CD4-positive, alpha-beta T cell (primary cell): ENCODE measurements at regions of chr2 and their contacts with region 1.

Region 1: DNA sequence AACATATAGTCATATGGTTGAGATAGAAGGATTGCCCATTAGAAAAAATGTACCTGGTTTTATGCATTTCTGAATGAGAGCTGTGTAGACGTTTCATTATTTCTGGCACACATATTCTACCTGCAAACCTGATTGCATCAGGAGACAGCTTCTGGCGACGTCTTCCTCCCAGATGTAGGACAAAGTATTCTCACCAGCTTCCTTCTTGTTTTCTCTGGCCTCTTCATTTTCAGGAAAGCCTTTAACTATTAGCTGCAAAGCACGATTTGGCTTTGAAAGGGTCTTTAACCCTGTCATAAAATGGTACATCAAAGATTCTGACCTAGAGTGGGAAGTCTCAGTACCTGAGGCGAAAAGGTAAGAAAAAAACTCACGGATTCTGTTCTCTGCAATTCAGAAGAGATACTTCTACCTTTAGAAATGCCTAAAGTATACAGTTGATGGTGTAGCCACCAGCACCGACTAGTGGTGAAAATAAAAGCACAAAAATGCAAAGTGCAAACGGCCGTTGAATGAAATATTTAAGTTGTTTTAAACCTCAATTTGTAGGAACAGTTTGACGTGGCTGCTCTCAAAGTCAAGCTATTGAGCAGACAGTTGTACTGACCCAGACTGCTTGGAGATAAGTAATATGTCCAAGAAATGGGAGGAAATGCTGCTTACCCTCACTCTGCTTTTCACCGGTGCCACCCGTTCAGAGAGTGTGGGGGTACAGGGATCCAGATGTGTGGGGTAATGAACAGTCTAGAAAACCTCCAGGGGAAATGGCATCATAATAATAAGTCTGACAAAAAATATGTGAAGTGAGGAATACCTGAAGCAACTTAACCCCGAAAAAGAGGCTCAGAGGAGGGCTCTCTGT is 20.2 kb downstream of the IL18RAP start:
- DNase-seq: peak in 13 of 14 experiments; percentile 11 to 75 (median 29)
- ATAC-seq: peak; percentile 78
- H3K4me3 ChIP-seq: no peak overlapping the region
- H3K4me3 Mint-ChIP-seq: no peak overlapping the region
- H3K27ac ChIP-seq: no peak overlapping the region
- H3K27ac Mint-ChIP-seq: no peak overlapping the region
- H3K4me1 ChIP-seq: no peaks in the 10 kb centered on the region
- H3K4me1 Mint-ChIP-seq: peaks cover 7% of the 10 kb centered on the region
- H3K27me3 ChIP-seq: no peaks in the 10 kb centered on the region
- H3K27me3 Mint-ChIP-seq: no peaks in the 10 kb centered on the region
- CTCF ChIP-seq: peak; percentile 84

Region 2: DNA sequence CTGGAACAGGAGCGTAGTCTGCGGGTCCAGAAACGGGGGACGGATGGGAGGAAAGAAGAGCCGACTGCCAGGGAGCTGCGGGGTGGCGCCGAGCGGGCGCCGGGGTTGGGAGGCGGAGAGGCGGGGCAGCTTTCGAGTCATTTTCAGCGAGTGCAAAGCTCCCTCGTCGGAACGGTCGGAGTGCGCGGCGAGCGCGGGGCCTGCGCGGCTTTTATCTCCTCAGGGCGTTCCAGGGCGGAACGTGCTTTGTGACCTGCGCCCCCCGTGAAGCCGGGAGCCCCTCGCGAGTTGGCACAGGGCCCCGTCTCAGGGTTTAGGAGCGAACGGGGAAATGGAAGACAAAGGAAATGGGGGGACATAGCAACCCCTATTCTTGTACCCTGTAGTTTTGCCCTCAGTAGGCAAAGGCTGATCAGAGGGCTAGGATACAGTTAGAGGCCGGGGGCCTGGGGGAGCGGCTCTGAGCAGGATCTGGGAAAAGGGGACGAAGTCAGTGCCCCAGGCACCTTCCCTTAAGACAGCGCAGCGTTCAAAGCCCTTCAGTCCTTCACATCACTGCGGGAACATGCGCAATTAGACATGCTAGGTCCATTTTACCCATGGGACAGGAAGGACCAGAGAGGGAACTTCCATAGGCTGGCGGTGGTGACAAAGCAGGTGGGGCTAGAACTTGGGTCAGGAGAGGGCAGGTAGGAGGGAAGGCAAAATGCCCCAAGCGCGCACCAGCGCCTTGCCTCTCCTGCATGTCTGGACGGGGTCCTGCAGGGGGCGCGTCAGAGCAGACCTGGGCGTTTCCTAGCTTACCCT is 192.0 kb before region 1 on chr2:
- CTCF ChIA-PET with region 1: interaction called, 7 read pairs
- POLR2A ChIA-PET with region 1: interaction called, 3 read pairs
- intact Hi-C with region 1: loop called (anchors 1 to 2 kb)
- DNase-seq: peak; percentile 48 to 84 (median 62)
- ATAC-seq: peak; percentile 87
- H3K4me3 ChIP-seq: peak overlapping the region; percentile 60
- H3K4me3 Mint-ChIP-seq: peak overlapping the region; percentile 96
- H3K27ac ChIP-seq: no peak overlapping the region
- H3K27ac Mint-ChIP-seq: peak overlapping the region; percentile 12
- H3K4me1 ChIP-seq: peaks cover 19% of the 10 kb centered on the region
- H3K4me1 Mint-ChIP-seq: peaks cover 23% of the 10 kb centered on the region
- H3K27me3 ChIP-seq: no peaks in the 10 kb centered on the region
- H3K27me3 Mint-ChIP-seq: no peaks in the 10 kb centered on the region
- CTCF ChIP-seq: peak; percentile 90

Region 3: DNA sequence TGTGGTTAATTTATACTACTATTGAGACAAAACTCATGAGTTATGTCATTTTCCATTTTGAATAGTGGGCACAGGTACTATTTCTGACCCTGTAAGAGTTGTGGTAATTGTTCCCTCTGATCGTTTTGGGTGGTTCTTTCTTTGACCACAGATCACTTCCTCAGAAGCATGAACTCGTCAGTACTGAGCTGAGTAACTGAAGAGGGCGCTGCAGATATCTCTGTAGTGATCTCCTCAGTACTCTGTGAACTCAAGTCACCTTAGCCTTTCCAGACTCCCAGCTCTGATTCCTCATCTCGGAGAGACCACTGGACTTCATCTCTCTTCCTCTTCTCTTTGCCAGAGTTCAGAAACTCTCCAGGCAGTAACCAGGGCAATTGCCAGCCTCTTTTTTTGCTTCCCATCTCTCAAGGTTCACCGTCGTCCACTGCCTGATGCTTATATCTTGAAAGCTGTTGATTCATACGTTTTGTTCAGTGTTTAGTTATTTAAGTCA is 141.3 kb before region 1 on chr2:
- CTCF ChIA-PET with region 1: interaction called, 11 read pairs
- POLR2A ChIA-PET with region 1: no interaction called
- intact Hi-C with region 1: loop called (anchors 1 to 2 kb)
- DNase-seq: peak in 10 of 14 experiments; percentile 7 to 76 (median 32)
- ATAC-seq: peak; percentile 80
- H3K4me3 ChIP-seq: no peak overlapping the region
- H3K4me3 Mint-ChIP-seq: no peak overlapping the region
- H3K27ac ChIP-seq: no peak overlapping the region
- H3K27ac Mint-ChIP-seq: no peak overlapping the region
- H3K4me1 ChIP-seq: peaks cover 7% of the 10 kb centered on the region
- H3K4me1 Mint-ChIP-seq: peaks cover 18% of the 10 kb centered on the region
- H3K27me3 ChIP-seq: peaks cover 0 to 3% of the 10 kb centered on the region in 2 experiments
- H3K27me3 Mint-ChIP-seq: peaks cover 10% of the 10 kb centered on the region
- CTCF ChIP-seq: peak; percentile 61

Region 4: DNA sequence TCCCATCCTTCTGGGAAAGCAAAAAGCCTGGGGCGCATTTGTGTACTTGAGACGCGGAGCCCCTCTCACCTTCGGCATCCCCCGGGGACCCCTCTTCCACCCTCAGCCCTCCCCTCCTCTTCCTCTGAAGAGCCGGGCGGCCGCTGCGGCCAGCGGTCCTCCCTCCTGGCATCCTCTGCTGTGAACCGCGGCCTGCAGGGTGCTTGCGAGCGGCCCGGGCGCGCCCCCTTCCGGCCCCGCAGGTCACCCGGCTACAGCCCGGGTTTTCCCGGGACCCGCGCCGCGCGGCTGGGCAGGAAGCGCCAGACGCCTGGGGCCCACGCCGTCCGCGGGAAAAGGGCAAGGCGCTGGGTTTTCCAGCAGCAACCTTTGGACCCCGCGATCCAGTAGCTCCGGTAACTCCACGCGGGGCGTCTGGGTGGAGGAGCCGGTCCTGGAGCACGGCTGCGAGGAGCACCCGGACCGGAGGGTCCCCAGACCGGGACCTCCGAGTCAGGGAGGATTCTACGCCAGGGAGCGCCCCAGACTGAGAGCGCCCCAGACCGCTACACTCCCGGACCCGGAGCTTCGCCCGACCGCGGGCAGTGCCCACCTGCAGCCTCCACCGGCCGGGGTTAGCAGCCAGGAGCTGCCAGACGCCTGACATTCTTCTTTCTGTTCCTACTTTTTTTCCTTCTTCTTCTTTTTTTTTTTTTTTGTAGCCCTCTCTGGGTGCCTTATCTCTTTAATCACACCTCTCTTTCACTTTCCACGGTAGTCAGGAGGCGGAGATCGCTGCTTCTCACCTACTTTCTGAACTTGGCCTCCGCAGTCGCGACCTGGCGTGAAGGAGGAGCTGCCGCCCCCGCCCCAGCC is 87.4 kb before region 1 on chr2 and contains the start of gene IL18R1:
- CTCF ChIA-PET with region 1: interaction called, 5 read pairs
- POLR2A ChIA-PET with region 1: interaction called, 3 read pairs
- intact Hi-C with region 1: loop called (anchors 2 to 5 kb)
- DNase-seq: peak; percentile 29 to 88 (median 55)
- ATAC-seq: peak; percentile 76
- H3K4me3 ChIP-seq: peak within 1 kb of the TSS; percentile 97
- H3K4me3 Mint-ChIP-seq: peak within 1 kb of the TSS; percentile 91
- H3K27ac ChIP-seq: peak within 1 kb of the TSS; percentile 41 to 83
- H3K27ac Mint-ChIP-seq: peak within 1 kb of the TSS; percentile 87
- H3K4me1 ChIP-seq: peaks cover 27% of the 10 kb centered on the region
- H3K4me1 Mint-ChIP-seq: peaks cover 44% of the 10 kb centered on the region
- H3K27me3 ChIP-seq: no peaks in the 10 kb centered on the region
- H3K27me3 Mint-ChIP-seq: no peaks in the 10 kb centered on the region
- CTCF ChIP-seq: peak; percentile 92
- total RNA-seq, gene IL18R1: 7.6 to 9.1 TPM

Region 5: GRCh38 chr2:102832789-102833188 is 389.6 kb after region 1 on chr2:
- CTCF ChIA-PET with region 1: no interaction called
- POLR2A ChIA-PET with region 1: no interaction called
- intact Hi-C with region 1: no loop called
- DNase-seq: no peak
- ATAC-seq: no peak
- H3K4me3 ChIP-seq: no peak overlapping the region
- H3K4me3 Mint-ChIP-seq: no peak overlapping the region
- H3K27ac ChIP-seq: no peak overlapping the region
- H3K27ac Mint-ChIP-seq: no peak overlapping the region
- H3K4me1 ChIP-seq: no peaks in the 10 kb centered on the region
- H3K4me1 Mint-ChIP-seq: no peaks in the 10 kb centered on the region
- H3K27me3 ChIP-seq: no peaks in the 10 kb centered on the region
- H3K27me3 Mint-ChIP-seq: no peaks in the 10 kb centered on the region
- CTCF ChIP-seq: no peak